ENCODE measurements at regions of chr2 and their contacts with region 1.

Region 1: DNA sequence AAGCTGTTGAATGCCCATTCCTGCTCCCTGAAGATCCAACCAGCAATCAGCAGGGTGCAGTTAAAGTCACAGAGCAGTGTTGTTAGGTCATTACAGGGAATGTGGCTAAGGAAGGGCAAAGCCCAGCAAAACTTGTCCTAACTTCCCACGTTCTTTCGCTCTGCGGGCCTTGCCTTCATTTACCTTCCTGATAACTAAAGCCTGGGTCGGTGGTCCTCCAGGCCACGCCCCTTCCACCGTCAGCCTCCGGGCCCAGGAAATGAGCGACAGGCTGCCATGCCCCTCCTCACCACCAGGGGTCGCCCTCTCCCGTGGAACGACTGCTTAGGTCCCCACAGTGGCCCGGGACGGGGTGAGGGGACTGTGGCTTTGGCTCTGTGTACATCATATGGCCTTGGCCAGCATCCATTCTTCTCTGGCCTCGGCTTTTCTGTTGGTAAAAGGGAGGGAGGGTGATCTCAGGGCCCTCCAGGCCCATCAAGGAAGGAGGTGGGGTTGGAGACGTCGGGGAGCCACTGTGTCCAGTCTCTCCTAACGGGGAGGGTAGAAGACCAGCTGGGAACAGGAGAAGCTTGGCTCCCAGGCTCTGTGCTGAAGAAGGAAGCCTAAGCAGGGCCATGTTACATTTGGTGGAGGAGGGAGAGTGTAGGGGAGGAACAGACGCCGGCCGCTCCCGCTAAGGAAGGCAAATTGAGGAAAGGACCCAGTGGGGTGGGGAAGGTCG is 2.2 kb downstream of the SH2D6 start:
- DNase-seq: peak; percentile 90
- ATAC-seq: peak; percentile 66
- H3K4me3 ChIP-seq: peak overlapping the region; percentile 41 to 97 (median 91)
- H3K27ac ChIP-seq: peak overlapping the region; percentile 83
- H3K4me1 ChIP-seq: peaks cover 58% of the 10 kb centered on the region
- H3K27me3 ChIP-seq: no peaks in the 10 kb centered on the region
- CTCF ChIP-seq: peak; percentile 100; the same call in 1 of the 2 replicates
- EP300 ChIP-seq: peak; percentile 46 to 74; a peak in 2 of 4 replicates
- POLR2A ChIP-seq: no peak
- RAD21 ChIP-seq: peak; percentile 100

Region 2: GRCh38 chr2:85318222-85319074 is 102.2 kb before region 1 on chr2:
- CTCF ChIA-PET with region 1: no interaction called
- POLR2A ChIA-PET with region 1: no interaction called
- in situ Hi-C with region 1: no loop called
- intact Hi-C with region 1: no loop called
- DNase-seq: no peak
- ATAC-seq: no peak
- H3K4me3 ChIP-seq: no peak overlapping the region
- H3K27ac ChIP-seq: no peak overlapping the region
- H3K4me1 ChIP-seq: peaks cover 62% of the 10 kb centered on the region
- H3K27me3 ChIP-seq: no peaks in the 10 kb centered on the region
- CTCF ChIP-seq: no peak
- EP300 ChIP-seq: no peak
- POLR2A ChIP-seq: no peak
- RAD21 ChIP-seq: no peak

Region 3: GRCh38 chr2:85369500-85369899 is 51.2 kb before region 1 on chr2:
- CTCF ChIA-PET with region 1: no interaction called
- POLR2A ChIA-PET with region 1: interaction called, 15 read pairs
- in situ Hi-C with region 1: no loop called
- intact Hi-C with region 1: no loop called
- DNase-seq: no peak
- ATAC-seq: no peak
- H3K4me3 ChIP-seq: no peak overlapping the region
- H3K27ac ChIP-seq: no peak overlapping the region
- H3K4me1 ChIP-seq: peaks cover 48% of the 10 kb centered on the region
- H3K27me3 ChIP-seq: no peaks in the 10 kb centered on the region
- CTCF ChIP-seq: no peak
- EP300 ChIP-seq: no peak
- POLR2A ChIP-seq: no peak
- RAD21 ChIP-seq: no peak

Region 4: GRCh38 chr2:85445316-85446295 is 24.9 kb after region 1 on chr2:
- CTCF ChIA-PET with region 1: no interaction called
- POLR2A ChIA-PET with region 1: interaction called, 16 read pairs
- in situ Hi-C with region 1: no loop called
- intact Hi-C with region 1: no loop called
- DNase-seq: no peak
- ATAC-seq: peak; percentile 46
- H3K4me3 ChIP-seq: no peak overlapping the region
- H3K27ac ChIP-seq: no peak overlapping the region
- H3K4me1 ChIP-seq: peaks cover 32% of the 10 kb centered on the region
- H3K27me3 ChIP-seq: peaks cover 0 to 10% of the 10 kb centered on the region in 2 experiments; a peak in 1 of 5 replicates
- CTCF ChIP-seq: no peak
- EP300 ChIP-seq: no peak
- POLR2A ChIP-seq: no peak
- RAD21 ChIP-seq: no peak

Region 5: GRCh38 chr2:85504778-85505323 is 84.2 kb after region 1 on chr2:
- CTCF ChIA-PET with region 1: no interaction called
- POLR2A ChIA-PET with region 1: no interaction called
- in situ Hi-C with region 1: no loop called
- intact Hi-C with region 1: loop called (anchors 1 kb)
- DNase-seq: no peak
- ATAC-seq: no peak
- H3K4me3 ChIP-seq: no peak overlapping the region
- H3K27ac ChIP-seq: no peak overlapping the region
- H3K4me1 ChIP-seq: peaks cover 53% of the 10 kb centered on the region
- H3K27me3 ChIP-seq: 0 out of 5 replicates have a peak, but pooled peaks cover 0 to 5% of the 10 kb centered on the region in 2 experiments
- CTCF ChIP-seq: no peak
- EP300 ChIP-seq: no peak
- POLR2A ChIP-seq: no peak
- RAD21 ChIP-seq: no peak

Region 6: GRCh38 chr2:85561317-85561979 is 140.8 kb after region 1 on chr2 and contains the start of gene GGCX:
- CTCF ChIA-PET with region 1: no interaction called
- POLR2A ChIA-PET with region 1: interaction called, 112 read pairs
- in situ Hi-C with region 1: no loop called
- intact Hi-C with region 1: no loop called
- DNase-seq: peak; percentile 95
- ATAC-seq: peak; percentile 89
- H3K4me3 ChIP-seq: peak within 1 kb of the TSS; percentile 84 to 98 (median 91)
- H3K27ac ChIP-seq: peak within 1 kb of the TSS; percentile 91
- H3K4me1 ChIP-seq: peaks cover 59% of the 10 kb centered on the region
- H3K27me3 ChIP-seq: peaks cover 0 to 4% of the 10 kb centered on the region in 2 experiments; a peak in 1 of 5 replicates
- CTCF ChIP-seq: peak; percentile 48
- EP300 ChIP-seq: peak; percentile 35 to 56; a peak in 3 of 4 replicates
- POLR2A ChIP-seq: peak; percentile 98
- RAD21 ChIP-seq: peak; percentile 70
- total RNA-seq, gene GGCX: 51.3 and 103 TPM in 2 replicates

Region 7: DNA sequence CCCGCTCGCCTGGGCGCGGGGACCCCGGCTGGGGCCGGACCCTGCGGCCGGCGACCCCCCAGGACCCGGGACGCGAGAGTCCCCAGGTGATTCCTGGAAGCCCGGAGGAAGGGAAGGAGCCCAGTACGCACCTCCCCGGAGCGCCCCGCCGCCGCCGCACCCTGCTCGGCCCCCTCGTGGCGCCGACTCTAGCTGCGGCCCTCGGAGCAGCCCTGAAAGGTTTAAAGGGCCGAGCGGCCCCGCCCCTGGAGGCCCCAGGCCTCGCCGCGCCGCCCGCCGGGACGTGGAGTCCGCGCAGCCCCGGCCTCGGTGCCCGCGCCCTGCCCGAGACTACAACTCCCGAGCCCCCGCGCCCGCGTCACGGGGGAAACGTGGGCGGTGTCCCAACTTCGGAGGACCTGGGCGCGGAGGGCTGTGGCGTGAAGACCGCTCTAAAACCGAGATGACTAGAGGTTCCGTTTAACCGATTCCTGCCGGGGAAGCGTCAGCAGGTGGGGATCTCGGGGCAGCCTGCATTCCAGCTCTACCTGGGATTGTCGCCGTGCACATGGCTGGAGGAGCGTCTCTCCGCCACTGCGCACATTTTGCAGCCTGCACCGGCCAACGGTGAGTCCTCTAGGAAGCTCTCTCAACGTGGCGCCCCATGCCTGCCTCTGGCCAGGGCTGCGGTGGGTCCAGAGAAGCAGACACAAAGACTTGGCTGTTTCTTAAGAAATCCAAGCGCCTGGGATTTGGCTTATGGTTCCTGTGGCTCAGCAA is 182.0 kb after region 1 on chr2 and contains the start of gene TMEM150A:
- CTCF ChIA-PET with region 1: no interaction called
- POLR2A ChIA-PET with region 1: interaction called, 60 read pairs
- in situ Hi-C with region 1: no loop called
- intact Hi-C with region 1: loop called (anchors 5 kb)
- DNase-seq: peak; percentile 87
- ATAC-seq: peak; percentile 90
- H3K4me3 ChIP-seq: peak within 1 kb of the TSS; percentile 84 to 98 (median 91)
- H3K27ac ChIP-seq: peak within 1 kb of the TSS; percentile 80
- H3K4me1 ChIP-seq: peaks cover 85% of the 10 kb centered on the region
- H3K27me3 ChIP-seq: no peaks in the 10 kb centered on the region; a peak in 1 of 5 replicates
- CTCF ChIP-seq: peak; percentile 46
- EP300 ChIP-seq: peak in 1 of 2 experiments; percentile 34; a peak in 1 of 4 replicates
- POLR2A ChIP-seq: peak in 1 of 2 experiments; percentile 66; a peak in 2 of 4 replicates
- RAD21 ChIP-seq: peak; percentile 89
- total RNA-seq, gene TMEM150A: 24.0 and 30.1 TPM in 2 replicates

Measured in HepG2 (cell line).